Testis (tissue), 5 donors: ENCODE measurements at regions of chr19 and their contacts with region 1.

Region 1: DNA sequence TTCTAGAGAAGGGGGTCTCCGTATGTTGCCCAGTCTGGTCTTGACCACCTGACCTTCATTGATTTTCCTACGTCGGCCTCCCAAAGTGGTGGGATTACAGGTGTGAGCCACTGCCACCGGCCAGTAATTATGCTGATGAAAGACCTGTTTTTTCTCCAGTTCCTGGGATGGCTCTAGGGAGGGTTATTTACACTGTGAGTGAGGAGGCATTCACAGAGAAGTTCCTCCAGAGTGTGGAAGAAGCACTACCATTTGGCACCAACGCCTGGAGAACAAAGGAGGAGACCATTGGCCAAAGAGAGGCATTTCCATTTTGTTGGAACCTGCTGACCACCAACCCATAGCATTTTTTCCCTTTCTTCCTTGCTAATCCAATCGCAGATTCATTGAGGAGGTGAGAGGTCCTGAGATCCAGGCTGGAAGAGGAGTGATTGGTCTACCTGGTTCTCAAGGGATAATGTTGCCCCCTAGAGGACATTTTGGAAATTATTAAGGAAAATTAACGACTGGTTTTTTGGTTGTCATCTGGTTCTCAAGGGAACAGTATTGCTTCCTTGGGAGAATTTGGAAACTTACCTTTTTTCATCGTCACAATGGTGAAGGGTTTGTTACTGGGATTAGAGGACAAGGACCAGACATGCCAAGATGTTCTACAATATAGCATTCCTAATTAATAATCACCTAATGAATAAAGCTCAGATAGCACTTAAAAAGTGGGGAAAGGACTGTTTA is 5.5 kb upstream of the SAE1 start:
- DNase-seq: peak; percentile 40
- H3K4me3 ChIP-seq: no peak overlapping the region
- H3K27ac ChIP-seq: no peak overlapping the region
- H3K4me1 ChIP-seq: no peaks in the 10 kb centered on the region
- H3K27me3 ChIP-seq: no peaks in the 10 kb centered on the region
- CTCF ChIP-seq: peak; percentile 71 to 81 (median 81)
- POLR2A ChIP-seq: no peak

Region 2: GRCh38 chr19:46913852-46914430 is 211.2 kb before region 1 on chr19:
- intact Hi-C with region 1: no loop called
- DNase-seq: no peak
- H3K4me3 ChIP-seq: no peak overlapping the region
- H3K27ac ChIP-seq: peak overlapping the region in 1 of 2 donors; percentile 34
- H3K4me1 ChIP-seq: peaks cover 7% of the 10 kb centered on the region
- H3K27me3 ChIP-seq: no peaks in the 10 kb centered on the region
- CTCF ChIP-seq: no peak
- POLR2A ChIP-seq: no peak

Region 3: DNA sequence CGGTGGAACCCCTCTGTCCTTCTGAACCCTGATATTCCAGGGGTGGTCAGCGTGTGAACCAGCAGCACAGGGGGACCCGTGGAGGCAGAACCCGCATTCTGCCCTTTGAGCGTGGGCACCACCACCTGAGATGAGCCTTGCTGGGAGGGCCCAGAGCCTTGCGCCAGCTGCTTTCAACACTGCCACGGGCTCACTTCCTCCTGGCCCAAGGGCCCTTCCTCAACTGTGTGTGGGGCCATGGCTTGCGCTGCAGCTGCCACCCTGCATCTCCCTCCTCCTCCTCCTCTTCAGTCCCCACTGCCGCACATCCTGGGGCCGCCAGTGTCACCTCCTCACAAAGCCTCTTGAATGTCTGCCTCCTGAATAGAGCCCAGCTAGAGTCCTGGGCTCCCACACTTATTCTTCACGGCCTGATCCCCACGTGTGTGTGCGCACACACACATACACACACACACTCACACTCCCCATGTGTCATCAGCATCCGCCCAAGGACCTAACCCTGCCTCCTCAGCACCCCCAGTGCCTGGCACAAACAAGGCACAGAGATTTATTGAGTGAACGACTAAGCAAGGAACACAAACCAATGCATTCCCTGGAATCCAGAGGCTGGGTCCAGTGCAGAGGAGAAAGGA is 49.8 kb before region 1 on chr19:
- intact Hi-C with region 1: loop called (anchors 10 kb)
- DNase-seq: no peak
- H3K4me3 ChIP-seq: no peak overlapping the region
- H3K27ac ChIP-seq: no peak overlapping the region
- H3K4me1 ChIP-seq: peaks cover 4% of the 10 kb centered on the region
- H3K27me3 ChIP-seq: no peaks in the 10 kb centered on the region
- CTCF ChIP-seq: no peak
- POLR2A ChIP-seq: no peak

Region 4: DNA sequence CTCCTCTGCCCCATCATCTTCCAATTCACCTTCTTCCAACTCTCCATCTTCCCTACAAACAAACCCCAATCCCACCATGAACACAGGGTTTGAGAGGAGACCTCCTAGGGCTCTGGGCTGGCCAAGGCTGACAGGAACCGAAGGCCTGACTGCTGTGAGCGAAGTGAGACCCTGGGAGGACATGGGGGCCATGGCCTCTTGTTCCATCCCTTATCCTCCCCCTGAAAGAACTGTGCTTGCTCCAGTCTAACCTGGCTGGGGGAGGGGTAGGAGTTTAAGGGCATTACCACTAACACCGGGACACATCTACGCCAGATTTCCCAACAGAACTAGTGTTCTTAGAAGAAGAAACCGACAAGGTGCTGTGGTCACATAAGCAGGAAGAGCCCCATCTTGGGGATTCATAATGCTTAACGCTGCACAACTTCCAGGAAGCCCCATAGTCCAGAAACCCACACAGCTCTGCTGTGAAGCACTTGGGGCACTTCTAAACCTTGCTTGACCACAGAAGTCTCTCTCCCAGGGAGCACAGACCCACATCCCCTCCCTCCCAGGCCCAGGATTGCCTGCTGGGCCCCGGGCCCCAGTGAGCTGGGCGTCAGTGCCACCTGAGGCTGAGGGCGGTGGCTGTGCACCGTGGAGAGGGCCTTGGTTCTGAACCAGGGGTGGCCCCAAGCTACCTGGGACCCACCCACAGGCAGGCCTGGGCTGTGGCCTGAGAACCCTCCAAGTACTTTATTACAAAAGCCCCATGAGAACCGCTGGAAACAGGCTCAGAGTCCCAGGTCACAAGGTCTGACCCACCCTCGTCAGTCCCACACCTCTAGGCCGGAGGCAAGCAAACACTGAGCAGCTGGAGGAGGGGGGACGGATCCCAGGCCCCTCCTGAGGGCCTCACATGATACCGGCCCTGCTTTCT is 30.3 kb before region 1 on chr19:
- intact Hi-C with region 1: no loop called
- DNase-seq: no peak
- H3K4me3 ChIP-seq: no peak overlapping the region
- H3K27ac ChIP-seq: peak overlapping the region; percentile 43 to 61
- H3K4me1 ChIP-seq: peaks cover 35% of the 10 kb centered on the region
- H3K27me3 ChIP-seq: no peaks in the 10 kb centered on the region
- CTCF ChIP-seq: no peak
- POLR2A ChIP-seq: no peak

Region 5: GRCh38 chr19:47176627-47177090 is 51.6 kb after region 1 on chr19:
- intact Hi-C with region 1: no loop called
- DNase-seq: no peak
- H3K4me3 ChIP-seq: no peak overlapping the region
- H3K27ac ChIP-seq: no peak overlapping the region
- H3K4me1 ChIP-seq: no peaks in the 10 kb centered on the region
- H3K27me3 ChIP-seq: no peaks in the 10 kb centered on the region
- CTCF ChIP-seq: no peak
- POLR2A ChIP-seq: no peak

Region 6: DNA sequence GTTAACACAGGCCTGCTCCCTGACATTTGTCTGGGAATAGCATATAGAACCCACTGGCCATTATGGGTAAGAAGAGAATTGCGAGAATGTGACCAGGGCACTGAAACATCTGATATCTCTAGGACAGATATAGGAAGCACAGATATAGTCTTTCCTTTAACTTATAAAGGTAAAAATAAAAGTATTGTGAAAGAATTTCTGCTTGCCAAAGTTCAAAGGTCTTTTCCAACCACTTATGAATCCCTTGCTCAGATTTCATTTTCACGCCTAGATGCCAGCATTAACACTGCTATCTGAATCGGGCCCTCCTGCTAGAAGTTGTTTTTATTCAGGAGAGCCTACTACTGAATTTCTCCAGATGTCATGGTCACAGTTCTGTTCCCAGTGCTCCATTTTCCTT is 78.2 kb after region 1 on chr19:
- intact Hi-C with region 1: no loop called
- DNase-seq: no peak
- H3K4me3 ChIP-seq: no peak overlapping the region
- H3K27ac ChIP-seq: no peak overlapping the region
- H3K4me1 ChIP-seq: no peaks in the 10 kb centered on the region
- H3K27me3 ChIP-seq: no peaks in the 10 kb centered on the region
- CTCF ChIP-seq: no peak
- POLR2A ChIP-seq: no peak